Heart right ventricle (tissue), 16 donors: ENCODE measurements at regions of chr1 and their contacts with region 1.

Region 1: GRCh38 chr1:34162852-34163766 is 1.9 kb downstream of the CSMD2 start:
- DNase-seq: peak; percentile 31 to 50
- ATAC-seq: peak; percentile 85 to 95 (median 92)
- H3K4me3 ChIP-seq: peak overlapping the region; percentile 6 to 51 (median 43)
- H3K27ac ChIP-seq: no peak overlapping the region
- H3K4me1 ChIP-seq: peaks cover 5 to 35% (median 23%) of the 10 kb centered on the region in 9 donors
- H3K27me3 ChIP-seq: peaks cover 7 to 88% (median 85%) of the 10 kb centered on the region in 7 donors
- CTCF ChIP-seq: peak; percentile 14 to 72 (median 62)

Region 2: DNA sequence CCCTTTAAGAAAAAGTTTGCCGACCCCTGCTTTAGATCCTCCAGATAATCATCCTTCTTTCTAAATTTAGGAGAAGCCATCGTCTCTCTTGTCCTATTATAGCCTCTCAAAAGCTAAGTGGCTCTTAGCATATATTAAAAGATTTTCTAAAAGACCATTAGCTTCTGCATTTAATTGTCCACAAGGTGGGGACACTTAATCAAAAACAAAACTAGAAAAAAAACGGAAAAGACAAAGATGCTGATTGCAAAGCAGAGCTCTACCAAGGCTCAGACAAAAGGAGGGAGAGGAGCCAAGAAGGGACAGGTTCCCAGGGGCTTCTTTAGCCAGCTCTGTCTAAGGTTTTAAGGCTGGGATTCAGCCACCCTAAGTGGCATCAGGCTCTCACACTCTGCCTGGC is 427.5 kb before region 1 on chr1:
- intact Hi-C with region 1: loop called in 5 of 10 experiments (anchors 5 to 10 kb)
- DNase-seq: no peak
- ATAC-seq: peak in 1 of 8 donors; percentile 12
- H3K4me3 ChIP-seq: no peak overlapping the region
- H3K27ac ChIP-seq: no peak overlapping the region
- H3K4me1 ChIP-seq: no peaks in the 10 kb centered on the region
- H3K27me3 ChIP-seq: peaks cover 0 to 34% (median 19%) of the 10 kb centered on the region in 7 donors
- CTCF ChIP-seq: peak in 7 of 9 donors; percentile 24 to 51 (median 45)